Endothelial cell of umbilical vein (primary cell): ENCODE measurements at regions of chr7 and their contacts with region 1.

Region 1: GRCh38 chr7:35624299-35625186 is 70.4 kb downstream of the HERPUD2 start:
- DNase-seq: peak; percentile 49
- H3K4me3 ChIP-seq: no peak overlapping the region
- H3K27ac ChIP-seq: no peak overlapping the region
- H3K4me1 ChIP-seq: no peaks in the 10 kb centered on the region
- H3K27me3 ChIP-seq: no peaks in the 10 kb centered on the region
- CTCF ChIP-seq: peak; percentile 68 to 79
- POLR2A ChIP-seq: no peak

Region 2: DNA sequence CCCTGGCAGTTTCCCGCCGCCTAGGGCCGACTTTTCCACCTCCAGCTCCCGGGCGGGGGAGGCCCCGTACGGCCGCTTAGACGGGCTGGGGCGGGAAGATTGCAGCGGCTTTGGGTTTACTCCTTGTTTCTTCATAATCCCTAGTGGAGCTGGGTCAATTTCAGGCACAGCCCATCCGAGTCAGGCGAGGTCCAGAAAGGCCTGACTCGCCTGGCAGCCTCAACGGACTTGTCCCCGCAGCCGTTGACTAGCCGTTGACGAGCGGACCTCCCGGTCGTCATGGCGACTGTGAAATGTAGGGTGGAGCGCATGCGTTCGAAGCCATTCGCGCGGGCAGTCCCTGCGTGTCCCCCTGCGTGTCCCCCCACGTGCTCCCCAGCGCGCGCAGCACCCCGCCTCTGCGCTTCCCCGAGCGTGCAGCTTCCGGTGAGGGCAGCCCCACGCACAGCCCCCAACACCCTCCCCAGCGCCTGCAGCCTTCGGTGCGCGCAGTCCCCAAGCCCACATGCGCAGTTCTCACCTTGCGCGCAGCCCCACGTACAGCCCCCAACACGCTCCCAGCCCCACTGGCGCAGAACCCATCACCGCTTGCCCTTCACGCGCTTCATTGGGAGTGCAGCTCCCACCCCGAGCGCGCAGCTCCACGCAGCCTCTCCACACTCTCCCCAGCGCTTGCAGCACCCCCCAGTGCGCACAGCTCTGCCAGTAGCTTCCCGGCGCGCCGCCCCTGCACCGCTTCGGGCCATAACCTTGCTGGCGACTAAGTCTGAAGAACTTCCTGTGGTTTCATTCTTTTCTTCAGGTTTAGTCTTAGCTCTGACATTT is 438.4 kb before region 1 on chr7:
- CTCF ChIA-PET with region 1: interaction called, 6 read pairs
- POLR2A ChIA-PET with region 1: no interaction called
- dilution Hi-C with region 1: no loop called
- intact Hi-C with region 1: loop called (anchors 10 kb)
- DNase-seq: peak; percentile 24
- H3K4me3 ChIP-seq: peak overlapping the region; percentile 8 to 34 (median 11)
- H3K27ac ChIP-seq: no peak overlapping the region
- H3K4me1 ChIP-seq: peaks cover 8% of the 10 kb centered on the region
- H3K27me3 ChIP-seq: peaks cover 7 to 17% of the 10 kb centered on the region in 2 experiments
- CTCF ChIP-seq: no peak
- POLR2A ChIP-seq: no peak

Region 3: GRCh38 chr7:35519971-35520809 is 104.4 kb before region 1 on chr7:
- CTCF ChIA-PET with region 1: interaction called, 11 read pairs
- POLR2A ChIA-PET with region 1: no interaction called
- dilution Hi-C with region 1: no loop called
- intact Hi-C with region 1: no loop called
- DNase-seq: peak; percentile 46
- H3K4me3 ChIP-seq: no peak overlapping the region
- H3K27ac ChIP-seq: no peak overlapping the region
- H3K4me1 ChIP-seq: no peaks in the 10 kb centered on the region
- H3K27me3 ChIP-seq: peaks cover 4 to 15% of the 10 kb centered on the region in 2 experiments
- CTCF ChIP-seq: peak; percentile 68 to 74
- POLR2A ChIP-seq: no peak

Region 4: DNA sequence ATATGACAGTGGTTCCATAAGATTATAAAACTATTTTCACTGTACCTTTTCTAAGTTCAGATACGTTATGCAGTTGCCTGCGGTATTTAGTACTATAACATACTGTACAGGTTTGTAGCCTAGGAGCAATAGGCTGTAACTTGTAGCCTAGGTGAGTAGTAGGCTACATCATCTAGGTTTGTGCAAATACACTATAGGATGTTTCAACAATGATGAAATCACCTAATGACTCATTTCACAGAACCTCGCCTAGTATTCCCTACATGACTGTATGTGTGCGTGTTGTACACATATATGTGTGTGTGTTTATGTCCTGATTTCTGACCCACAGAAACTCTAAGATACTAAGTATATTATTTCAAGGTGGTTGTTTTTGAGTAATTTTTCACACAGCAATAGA is 68.6 kb before region 1 on chr7:
- CTCF ChIA-PET with region 1: interaction called, 4 read pairs
- POLR2A ChIA-PET with region 1: no interaction called
- dilution Hi-C with region 1: no loop called
- intact Hi-C with region 1: loop called (anchors 5 kb)
- DNase-seq: no peak
- H3K4me3 ChIP-seq: no peak overlapping the region
- H3K27ac ChIP-seq: no peak overlapping the region
- H3K4me1 ChIP-seq: no peaks in the 10 kb centered on the region
- H3K27me3 ChIP-seq: peaks cover 3 to 5% of the 10 kb centered on the region in 2 experiments
- CTCF ChIP-seq: no peak
- POLR2A ChIP-seq: no peak

Region 5: DNA sequence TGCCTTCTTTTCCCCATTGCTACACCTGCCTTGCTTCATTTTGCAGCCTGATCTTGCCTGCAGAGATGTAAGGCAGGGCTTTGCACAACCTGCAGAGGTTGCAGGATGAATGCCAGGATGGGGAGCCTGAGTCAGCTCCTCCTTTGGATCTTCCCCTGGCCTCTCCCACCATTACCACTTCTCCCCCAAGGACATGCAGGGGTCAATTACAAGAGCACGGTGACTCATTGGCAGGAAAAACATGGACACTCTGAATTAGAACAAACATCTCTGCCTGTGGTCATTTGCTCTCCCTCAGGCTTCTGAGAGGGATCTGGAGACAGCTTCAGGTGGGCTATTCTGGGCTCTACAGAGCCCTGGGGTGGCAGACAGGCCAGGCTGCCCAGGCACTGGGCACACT is 18.8 kb before region 1 on chr7:
- CTCF ChIA-PET with region 1: interaction called, 10 read pairs
- POLR2A ChIA-PET with region 1: no interaction called
- dilution Hi-C with region 1: no loop called
- intact Hi-C with region 1: no loop called
- DNase-seq: peak; percentile 47
- H3K4me3 ChIP-seq: no peak overlapping the region
- H3K27ac ChIP-seq: no peak overlapping the region
- H3K4me1 ChIP-seq: peaks cover 9% of the 10 kb centered on the region
- H3K27me3 ChIP-seq: no peaks in the 10 kb centered on the region
- CTCF ChIP-seq: no peak
- POLR2A ChIP-seq: no peak

Region 6: DNA sequence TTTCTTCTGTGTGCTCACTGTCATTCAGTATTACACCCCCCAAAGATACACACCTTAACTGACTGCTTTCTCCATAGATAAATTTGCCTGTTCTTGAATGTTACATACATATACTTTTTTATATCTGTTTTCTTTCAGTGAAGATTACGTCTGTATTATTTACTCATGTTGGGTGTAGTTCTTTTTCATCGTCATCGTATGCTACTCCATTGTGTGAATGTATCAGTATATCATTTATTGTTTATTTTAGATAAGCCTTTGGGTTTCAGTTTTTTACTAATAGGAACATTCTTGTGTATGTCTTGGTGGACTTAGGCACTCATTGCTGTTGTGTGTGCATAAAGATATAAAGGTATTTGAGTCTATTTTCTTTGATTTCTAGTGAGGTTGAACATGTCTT is 240.7 kb after region 1 on chr7:
- CTCF ChIA-PET with region 1: no interaction called
- POLR2A ChIA-PET with region 1: no interaction called
- dilution Hi-C with region 1: no loop called
- intact Hi-C with region 1: no loop called
- DNase-seq: no peak
- H3K4me3 ChIP-seq: no peak overlapping the region
- H3K27ac ChIP-seq: no peak overlapping the region
- H3K4me1 ChIP-seq: no peaks in the 10 kb centered on the region
- H3K27me3 ChIP-seq: no peaks in the 10 kb centered on the region
- CTCF ChIP-seq: no peak
- POLR2A ChIP-seq: no peak

Region 7: DNA sequence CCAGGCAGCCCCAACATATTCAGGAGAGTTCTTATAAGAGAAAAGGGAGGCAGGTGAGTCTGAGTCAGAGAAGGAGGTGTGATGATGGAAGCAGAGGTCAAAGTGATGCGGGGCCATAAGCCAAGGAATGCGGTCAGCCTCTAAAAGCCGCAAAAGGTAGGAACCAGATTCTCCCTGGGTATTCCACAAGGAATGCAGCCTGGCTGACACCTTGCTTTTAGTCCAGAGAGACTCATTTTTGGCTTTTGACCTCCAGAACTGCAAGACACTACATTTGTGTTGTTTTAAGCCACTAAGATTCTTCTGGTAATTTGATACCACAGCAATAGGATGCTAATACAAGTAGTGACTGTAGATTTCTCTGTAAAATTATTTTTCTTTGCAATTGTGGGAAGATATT is 377.0 kb after region 1 on chr7:
- CTCF ChIA-PET with region 1: no interaction called
- POLR2A ChIA-PET with region 1: no interaction called
- dilution Hi-C with region 1: no loop called
- intact Hi-C with region 1: no loop called
- DNase-seq: no peak
- H3K4me3 ChIP-seq: no peak overlapping the region
- H3K27ac ChIP-seq: no peak overlapping the region
- H3K4me1 ChIP-seq: no peaks in the 10 kb centered on the region
- H3K27me3 ChIP-seq: peaks cover 0 to 3% of the 10 kb centered on the region in 2 experiments
- CTCF ChIP-seq: no peak
- POLR2A ChIP-seq: no peak